Adrenal gland (tissue), 19 donors: ENCODE measurements at regions of chr2 and their contacts with region 1.

Region 1: GRCh38 chr2:171095014-171095582 is 65.6 kb downstream of the TLK1 start:
- DNase-seq: no peak
- H3K4me3 ChIP-seq: no peak overlapping the region
- H3K27ac ChIP-seq: no peak overlapping the region
- H3K4me1 ChIP-seq: no peaks in the 10 kb centered on the region
- H3K27me3 ChIP-seq: no peaks in the 10 kb centered on the region
- CTCF ChIP-seq: no peak
- POLR2A ChIP-seq: no peak

Region 2: GRCh38 chr2:171141320-171141719 is 46.2 kb after region 1 on chr2:
- intact Hi-C with region 1: loop called in 1 of 2 experiments (anchors 10 kb)
- DNase-seq: peak in 3 of 7 donors; percentile 28 to 37 (median 33)
- H3K4me3 ChIP-seq: no peak overlapping the region
- H3K27ac ChIP-seq: peak overlapping the region in 1 of 5 donors; percentile 11
- H3K4me1 ChIP-seq: peaks cover 36 to 70% of the 10 kb centered on the region in 2 donors
- H3K27me3 ChIP-seq: no peaks in the 10 kb centered on the region
- CTCF ChIP-seq: peak in 3 of 6 experiments; percentile 23 to 27 (median 24)
- POLR2A ChIP-seq: no peak

Region 3: GRCh38 chr2:171244970-171245782 is 150.1 kb after region 1 on chr2:
- intact Hi-C with region 1: no loop called
- DNase-seq: peak in 1 of 7 donors; percentile 3
- H3K4me3 ChIP-seq: no peak overlapping the region
- H3K27ac ChIP-seq: no peak overlapping the region
- H3K4me1 ChIP-seq: no peaks in the 10 kb centered on the region
- H3K27me3 ChIP-seq: no peaks in the 10 kb centered on the region
- CTCF ChIP-seq: peak in 1 of 6 experiments; percentile 5
- POLR2A ChIP-seq: no peak